Breast epithelium (tissue), 4 donors: ENCODE measurements at regions of chr11 and their contacts with region 1.

Region 1: DNA sequence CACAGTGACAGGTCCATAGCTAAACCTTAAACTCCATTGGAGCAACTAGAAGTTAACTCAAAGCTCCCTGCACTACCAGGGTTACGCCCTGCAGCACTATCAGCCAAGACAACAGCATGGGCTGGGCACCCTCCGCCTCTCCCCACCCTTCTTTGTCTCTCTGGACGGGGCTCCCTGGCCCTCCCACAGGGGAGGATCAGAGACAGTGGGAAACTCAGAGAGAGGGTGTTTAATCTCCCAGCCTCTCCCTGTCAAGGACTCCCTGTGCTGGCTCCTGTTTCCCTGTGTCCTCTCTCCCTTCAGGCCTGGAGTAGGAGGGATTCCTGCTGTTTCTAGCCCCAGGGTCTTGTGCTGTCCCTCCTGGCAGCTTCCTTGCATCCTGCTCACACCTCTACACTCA is 56.9 kb upstream of the CSNK2A3 start:
- DNase-seq: no peak
- H3K4me3 ChIP-seq: no peak overlapping the region
- H3K27ac ChIP-seq: no peak overlapping the region
- H3K4me1 ChIP-seq: no peaks in the 10 kb centered on the region
- H3K27me3 ChIP-seq: no peaks in the 10 kb centered on the region
- CTCF ChIP-seq: no peak
- POLR2A ChIP-seq: no peak

Region 2: GRCh38 chr11:11349870-11350337 is 60.0 kb before region 1 on chr11:
- intact Hi-C with region 1: loop called (anchors 2 kb)
- DNase-seq: no peak
- H3K4me3 ChIP-seq: no peak overlapping the region
- H3K27ac ChIP-seq: peak overlapping the region in 1 of 2 donors; percentile 3
- H3K4me1 ChIP-seq: no peaks in the 10 kb centered on the region
- H3K27me3 ChIP-seq: no peaks in the 10 kb centered on the region
- CTCF ChIP-seq: no peak
- POLR2A ChIP-seq: no peak